ENCODE measurements at regions of chr10 and their contacts with region 1.

Region 1: GRCh38 chr10:106175760-106176377 is 988.6 kb downstream of the SORCS1 start:
- DNase-seq: no peak
- ATAC-seq: peak; percentile 24; the same call in 1 of the 2 replicates
- H3K4me3 ChIP-seq: no peak overlapping the region
- H3K27ac ChIP-seq: no peak overlapping the region
- H3K4me1 ChIP-seq: no peaks in the 10 kb centered on the region
- H3K27me3 ChIP-seq: no peaks in the 10 kb centered on the region
- CTCF ChIP-seq: peak; percentile 42
- POLR2A ChIP-seq: no peak
- RAD21 ChIP-seq: peak; percentile 29

Region 2: DNA sequence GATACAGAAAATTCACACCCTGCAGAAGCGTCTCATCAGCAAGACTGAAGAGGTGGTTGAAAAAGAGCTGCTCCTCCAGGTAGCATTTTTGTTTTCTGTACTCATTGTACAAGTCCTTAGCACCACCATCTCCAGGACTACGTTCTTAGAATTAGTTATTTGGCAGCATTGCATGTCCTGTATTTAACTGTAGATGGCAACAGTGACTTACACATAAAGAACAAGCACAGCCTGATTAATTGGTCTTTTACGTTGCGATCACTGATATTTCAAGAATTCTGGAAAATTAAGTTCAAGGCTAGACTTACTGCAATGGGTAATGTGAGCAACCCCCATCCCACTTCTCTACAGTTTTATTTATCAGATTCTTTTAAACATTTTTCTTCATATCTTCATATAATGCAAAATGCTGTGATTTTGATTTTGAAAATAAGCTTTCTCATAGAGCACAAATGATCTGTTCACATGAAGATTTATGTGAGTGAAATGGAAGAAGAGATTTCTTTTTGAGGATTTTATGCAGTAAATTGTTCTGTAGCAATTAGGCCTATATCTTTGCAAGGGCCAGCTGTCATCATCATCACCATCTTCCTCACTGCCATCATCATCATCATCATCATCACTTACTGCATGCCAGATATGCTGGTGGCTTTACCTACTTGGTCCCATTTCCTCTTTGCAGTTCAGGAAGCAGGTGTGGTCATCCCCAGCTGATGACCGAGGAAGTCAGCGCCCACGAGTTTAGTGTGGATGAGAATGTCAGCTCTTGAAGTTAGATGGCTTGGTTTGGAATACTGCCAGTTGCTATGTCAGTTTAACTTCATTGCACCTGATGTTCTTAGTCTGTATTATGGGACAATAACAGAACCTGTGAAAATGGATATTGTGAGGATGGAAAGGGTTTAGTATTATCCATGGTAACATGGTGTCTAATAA is 1768.9 kb before region 1 on chr10:
- CTCF ChIA-PET with region 1: no interaction called
- POLR2A ChIA-PET with region 1: no interaction called
- dilution Hi-C with region 1: no loop called
- in situ Hi-C with region 1: no loop called
- intact Hi-C with region 1: loop called (anchors 10 kb)
- DNase-seq: peak; percentile 50
- ATAC-seq: peak; percentile 66
- H3K4me3 ChIP-seq: no peak overlapping the region
- H3K27ac ChIP-seq: no peak overlapping the region
- H3K4me1 ChIP-seq: no peaks in the 10 kb centered on the region
- H3K27me3 ChIP-seq: peaks cover 2% of the 10 kb centered on the region; the same call in 1 of the 2 replicates
- CTCF ChIP-seq: peak; percentile 55
- POLR2A ChIP-seq: no peak
- RAD21 ChIP-seq: peak; percentile 66

Region 3: GRCh38 chr10:104580774-104581675 is 1594.8 kb before region 1 on chr10:
- CTCF ChIA-PET with region 1: no interaction called
- POLR2A ChIA-PET with region 1: no interaction called
- dilution Hi-C with region 1: no loop called
- in situ Hi-C with region 1: no loop called
- intact Hi-C with region 1: loop called (anchors 5 kb)
- DNase-seq: peak; percentile 51
- ATAC-seq: peak; percentile 90
- H3K4me3 ChIP-seq: no peak overlapping the region
- H3K27ac ChIP-seq: no peak overlapping the region
- H3K4me1 ChIP-seq: no peaks in the 10 kb centered on the region; the same call in 1 of the 2 replicates
- H3K27me3 ChIP-seq: no peaks in the 10 kb centered on the region; the same call in none of the 2 replicates
- CTCF ChIP-seq: peak; percentile 70
- POLR2A ChIP-seq: no peak
- RAD21 ChIP-seq: peak; percentile 62

Region 4: DNA sequence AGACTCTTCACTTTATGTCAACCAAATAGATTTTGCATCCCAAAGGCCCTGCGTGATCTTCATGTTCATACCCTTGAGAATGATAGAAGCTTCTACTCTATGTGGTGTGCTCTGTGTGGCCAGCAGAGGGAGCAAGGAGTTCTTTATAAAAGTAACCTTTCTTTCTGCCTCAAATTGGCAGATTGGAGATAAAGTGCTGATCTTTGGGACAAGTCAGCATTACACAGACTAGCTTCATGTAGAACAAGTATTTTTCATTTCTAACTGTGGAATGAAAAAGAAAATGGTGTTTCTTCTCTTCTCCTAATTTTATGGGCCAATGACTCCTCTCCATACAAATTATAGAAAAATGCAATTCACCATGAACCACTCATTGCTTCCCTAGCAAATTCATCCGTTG is 225.5 kb before region 1 on chr10:
- CTCF ChIA-PET with region 1: no interaction called
- POLR2A ChIA-PET with region 1: no interaction called
- dilution Hi-C with region 1: no loop called
- in situ Hi-C with region 1: no loop called
- intact Hi-C with region 1: loop called (anchors 5 kb)
- DNase-seq: peak; percentile 34
- ATAC-seq: peak; percentile 53
- H3K4me3 ChIP-seq: no peak overlapping the region
- H3K27ac ChIP-seq: no peak overlapping the region
- H3K4me1 ChIP-seq: no peaks in the 10 kb centered on the region
- H3K27me3 ChIP-seq: no peaks in the 10 kb centered on the region
- CTCF ChIP-seq: peak; percentile 48
- POLR2A ChIP-seq: no peak
- RAD21 ChIP-seq: peak; percentile 32

Region 5: DNA sequence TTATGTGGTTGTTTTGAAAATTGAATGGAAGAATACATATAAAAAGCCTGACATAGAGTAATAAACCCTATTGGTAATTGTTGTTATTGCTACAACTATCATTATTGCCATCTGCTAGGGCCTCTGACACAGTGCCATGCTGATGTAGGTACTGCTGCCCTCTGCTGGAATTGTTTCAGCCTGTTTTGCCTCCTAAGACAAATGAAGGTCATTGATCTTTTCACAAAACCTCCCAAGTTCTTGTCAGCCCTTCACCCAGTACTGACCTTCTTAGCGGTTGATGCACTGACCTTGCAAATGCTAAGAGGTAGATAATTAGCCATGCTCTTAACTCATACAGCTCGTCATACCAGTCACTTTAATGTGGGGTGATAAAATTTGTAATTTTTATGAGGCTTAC is 13.4 kb after region 1 on chr10:
- CTCF ChIA-PET with region 1: no interaction called
- POLR2A ChIA-PET with region 1: no interaction called
- dilution Hi-C with region 1: no loop called
- in situ Hi-C with region 1: no loop called
- intact Hi-C with region 1: no loop called
- DNase-seq: no peak
- ATAC-seq: no peak
- H3K4me3 ChIP-seq: no peak overlapping the region
- H3K27ac ChIP-seq: no peak overlapping the region
- H3K4me1 ChIP-seq: no peaks in the 10 kb centered on the region
- H3K27me3 ChIP-seq: no peaks in the 10 kb centered on the region
- CTCF ChIP-seq: 0 out of 2 replicates have a peak, but pooled peaks have one; percentile 11
- POLR2A ChIP-seq: no peak
- RAD21 ChIP-seq: no peak

Region 6: DNA sequence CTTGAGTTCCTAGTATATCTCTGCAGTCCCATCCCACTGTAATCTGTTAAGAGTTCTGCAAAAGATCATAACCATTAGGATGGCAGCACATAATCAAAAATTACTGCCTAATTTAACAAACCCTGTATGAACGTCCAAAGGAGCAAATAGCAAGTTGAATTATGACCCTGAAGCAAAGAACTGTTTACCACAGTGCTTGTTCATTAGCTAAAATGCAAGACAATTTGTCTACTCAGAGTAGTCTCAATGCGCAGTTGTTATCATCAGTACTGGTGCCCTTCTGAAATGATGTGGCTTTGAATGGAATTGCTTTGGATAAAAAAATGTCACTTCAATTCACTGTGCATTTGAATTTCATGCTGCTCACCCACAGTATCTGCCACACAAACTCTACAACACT is 171.7 kb after region 1 on chr10:
- CTCF ChIA-PET with region 1: no interaction called
- POLR2A ChIA-PET with region 1: no interaction called
- dilution Hi-C with region 1: no loop called
- in situ Hi-C with region 1: no loop called
- intact Hi-C with region 1: no loop called
- DNase-seq: no peak
- ATAC-seq: no peak
- H3K4me3 ChIP-seq: no peak overlapping the region
- H3K27ac ChIP-seq: no peak overlapping the region
- H3K4me1 ChIP-seq: no peaks in the 10 kb centered on the region
- H3K27me3 ChIP-seq: no peaks in the 10 kb centered on the region
- CTCF ChIP-seq: no peak
- POLR2A ChIP-seq: no peak
- RAD21 ChIP-seq: no peak

Region 7: GRCh38 chr10:106571192-106571946 is 395.5 kb after region 1 on chr10:
- CTCF ChIA-PET with region 1: no interaction called
- POLR2A ChIA-PET with region 1: no interaction called
- dilution Hi-C with region 1: no loop called
- in situ Hi-C with region 1: no loop called
- intact Hi-C with region 1: loop called (anchors 10 kb)
- DNase-seq: peak; percentile 61
- ATAC-seq: peak; percentile 48; the same call in 1 of the 2 replicates
- H3K4me3 ChIP-seq: no peak overlapping the region
- H3K27ac ChIP-seq: no peak overlapping the region
- H3K4me1 ChIP-seq: no peaks in the 10 kb centered on the region
- H3K27me3 ChIP-seq: no peaks in the 10 kb centered on the region
- CTCF ChIP-seq: peak; percentile 50
- POLR2A ChIP-seq: no peak
- RAD21 ChIP-seq: peak; percentile 53

Measured in IMR-90 (cell line).